ENCODE measurements at regions of chr16 and their contacts with region 1.

Region 1: DNA sequence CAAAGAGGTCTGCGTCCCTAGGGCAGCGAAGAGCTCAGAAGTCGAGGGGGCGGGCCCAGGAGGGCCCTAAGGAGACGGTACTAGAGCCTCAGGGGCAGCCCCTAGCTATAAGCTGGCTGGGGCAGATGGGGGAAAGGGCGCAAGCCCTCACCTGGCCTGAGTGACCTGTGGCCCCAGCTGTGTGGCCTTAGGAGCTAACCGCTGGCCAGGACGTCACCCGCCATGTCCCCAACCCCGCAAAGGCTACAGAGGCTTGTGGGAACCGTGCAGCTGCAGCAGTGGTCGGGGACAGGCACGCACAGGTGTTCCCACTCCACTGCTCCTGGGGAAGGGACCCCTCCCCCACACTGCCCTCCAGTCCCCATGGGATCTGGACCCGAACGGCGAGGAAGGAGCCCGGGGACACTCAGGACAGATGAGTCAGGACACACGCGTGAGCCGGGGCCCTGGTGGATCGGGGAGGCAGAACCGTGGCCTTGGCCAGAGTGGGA is 2.0 kb upstream of the CTRB2 start:
- DNase-seq: no peak
- H3K4me3 ChIP-seq: no peak overlapping the region
- H3K27ac ChIP-seq: no peak overlapping the region
- H3K4me1 ChIP-seq: no peaks in the 10 kb centered on the region
- H3K27me3 ChIP-seq: peaks cover 0 to 14% (median 2%) of the 10 kb centered on the region in 4 donors
- CTCF ChIP-seq: no peak
- EP300 ChIP-seq: no peak
- POLR2A ChIP-seq: no peak

Region 2: GRCh38 chr16:75130150-75130771 is 78.7 kb before region 1 on chr16:
- intact Hi-C with region 1: no loop called
- DNase-seq: no peak
- H3K4me3 ChIP-seq: no peak overlapping the region
- H3K27ac ChIP-seq: no peak overlapping the region
- H3K4me1 ChIP-seq: no peaks in the 10 kb centered on the region
- H3K27me3 ChIP-seq: no peaks in the 10 kb centered on the region
- CTCF ChIP-seq: no peak
- EP300 ChIP-seq: no peak
- POLR2A ChIP-seq: no peak

Region 3: GRCh38 chr16:75224306-75225091 is 15.5 kb after region 1 on chr16:
- intact Hi-C with region 1: loop called (anchors 2 kb)
- DNase-seq: no peak
- H3K4me3 ChIP-seq: no peak overlapping the region
- H3K27ac ChIP-seq: no peak overlapping the region
- H3K4me1 ChIP-seq: peaks cover 0 to 5% (median 0%) of the 10 kb centered on the region in 4 donors
- H3K27me3 ChIP-seq: peaks cover 0 to 24% (median 0%) of the 10 kb centered on the region in 4 donors
- CTCF ChIP-seq: no peak
- EP300 ChIP-seq: no peak
- POLR2A ChIP-seq: no peak

Region 4: DNA sequence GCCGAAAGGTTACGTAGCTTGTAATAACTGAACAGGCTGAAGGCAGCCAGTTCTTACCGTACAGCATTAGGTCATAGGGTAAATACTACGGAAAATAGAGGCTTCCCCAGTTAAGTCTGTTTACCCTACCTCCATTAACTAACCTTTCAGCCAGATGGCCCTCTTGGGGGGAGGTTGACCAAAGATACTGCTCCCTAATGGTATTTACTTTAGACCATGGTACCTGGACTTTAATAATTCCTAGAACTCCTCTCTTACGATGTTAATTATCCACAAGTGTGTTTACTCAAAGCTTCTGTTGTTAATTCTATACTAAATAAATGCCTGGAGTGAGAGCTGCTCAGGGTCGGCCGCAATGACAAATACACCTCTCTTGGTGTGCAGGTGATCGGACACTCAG is 423.9 kb after region 1 on chr16:
- intact Hi-C with region 1: no loop called
- DNase-seq: no peak
- H3K4me3 ChIP-seq: no peak overlapping the region
- H3K27ac ChIP-seq: no peak overlapping the region
- H3K4me1 ChIP-seq: no peaks in the 10 kb centered on the region
- H3K27me3 ChIP-seq: no peaks in the 10 kb centered on the region
- CTCF ChIP-seq: no peak
- EP300 ChIP-seq: no peak
- POLR2A ChIP-seq: no peak